Activated CD8-positive, alpha-beta memory T cell treated with anti-CD3 and anti-CD28 coated beads, Interleukin-2, amount 10 ng/mL, durations not matched to agents 7 days and 5 days (primary cell): ENCODE measurements at regions of chr3 and their contacts with region 1.

Region 1: GRCh38 chr3:71859123-71859519 is 74.2 kb upstream of the PROK2 start:
- DNase-seq: no peak
- ATAC-seq: peak; percentile 80
- H3K4me3 Mint-ChIP-seq: no peak overlapping the region
- H3K27ac Mint-ChIP-seq: no peak overlapping the region
- H3K4me1 Mint-ChIP-seq: peaks cover 15% of the 10 kb centered on the region
- H3K27me3 Mint-ChIP-seq: peaks cover 26% of the 10 kb centered on the region

Region 2: DNA sequence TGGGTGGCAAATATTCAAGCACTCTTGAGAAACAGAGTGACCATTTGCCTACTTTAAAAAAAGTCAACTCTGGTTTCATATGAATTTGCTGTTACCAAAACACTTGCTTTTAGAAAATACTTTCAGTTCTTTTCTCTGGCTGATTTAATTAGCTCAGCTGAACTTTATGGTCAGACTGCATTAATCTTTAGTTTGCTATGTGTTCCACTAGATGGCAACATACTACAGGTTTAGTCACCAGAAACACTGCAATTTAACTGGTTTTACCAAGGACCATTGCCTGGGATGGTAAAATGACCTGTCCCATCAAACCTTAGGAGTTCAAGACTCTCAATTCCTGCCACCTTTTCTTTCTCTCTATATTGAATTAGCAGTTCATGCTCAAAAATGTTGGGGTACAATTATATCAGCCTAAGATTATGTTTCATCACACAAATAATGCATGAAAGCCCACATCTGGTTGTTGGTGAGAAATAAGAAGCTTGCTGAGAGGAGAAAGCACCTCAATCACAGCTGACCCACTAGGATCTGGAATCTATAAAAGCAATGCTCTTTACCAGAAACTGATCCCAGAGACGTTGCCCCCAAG is 148.1 kb before region 1 on chr3:
- CTCF ChIA-PET with region 1: interaction called, 29 read pairs
- DNase-seq: no peak
- ATAC-seq: peak; percentile 77
- H3K4me3 Mint-ChIP-seq: no peak overlapping the region
- H3K27ac Mint-ChIP-seq: peak overlapping the region; percentile 57
- H3K4me1 Mint-ChIP-seq: peaks cover 65% of the 10 kb centered on the region
- H3K27me3 Mint-ChIP-seq: no peaks in the 10 kb centered on the region